K562 (cell line): ENCODE measurements at regions of chr7 and their contacts with region 1.

Region 1: GRCh38 chr7:121395961-121396757 is at the start of gene FAM3C:
- DNase-seq: peak; percentile 98 to 99 (median 99)
- ATAC-seq: peak; percentile 97
- H3K4me3 ChIP-seq: peak within 1 kb of the TSS; percentile 89
- H3K27ac ChIP-seq: peak within 1 kb of the TSS; percentile 79
- H3K4me1 ChIP-seq: peaks cover 5 to 10% of the 10 kb centered on the region in 2 experiments; a peak in 3 of 5 replicates
- H3K27me3 ChIP-seq: no peaks in the 10 kb centered on the region
- CTCF ChIP-seq: peak; percentile 92 to 95 (median 93)
- EP300 ChIP-seq: peak; percentile 32
- POLR2A ChIP-seq: peak; percentile 97
- RAD21 ChIP-seq: peak; percentile 54 to 69
- polyA plus RNA-seq, gene FAM3C: 10.6 to 13.1 TPM

Region 2: GRCh38 chr7:120950539-120951308 is 445.4 kb before region 1 on chr7 and contains the start of gene ING3:
- CTCF ChIA-PET with region 1: no interaction called
- POLR2A ChIA-PET with region 1: interaction called, 4 read pairs
- in situ Hi-C with region 1: no loop called
- intact Hi-C with region 1: loop called (anchors 5 kb)
- DNase-seq: peak; percentile 97 to 100 (median 98)
- ATAC-seq: peak; percentile 91
- H3K4me3 ChIP-seq: peak within 1 kb of the TSS; percentile 55
- H3K27ac ChIP-seq: peak within 1 kb of the TSS; percentile 95
- H3K4me1 ChIP-seq: peaks cover 0 to 5% of the 10 kb centered on the region in 2 experiments; a peak in 2 of 5 replicates
- H3K27me3 ChIP-seq: no peaks in the 10 kb centered on the region
- CTCF ChIP-seq: no peak
- EP300 ChIP-seq: peak; percentile 65
- POLR2A ChIP-seq: peak; percentile 95
- RAD21 ChIP-seq: no peak; a peak in 1 of 4 replicates
- polyA plus RNA-seq, gene ING3: 216 to 233 TPM

Region 3: GRCh38 chr7:121313793-121314676 is 82.1 kb before region 1 on chr7:
- CTCF ChIA-PET with region 1: no interaction called
- POLR2A ChIA-PET with region 1: no interaction called
- in situ Hi-C with region 1: no loop called
- intact Hi-C with region 1: no loop called
- DNase-seq: no peak
- ATAC-seq: peak; percentile 51
- H3K4me3 ChIP-seq: no peak overlapping the region
- H3K27ac ChIP-seq: no peak overlapping the region
- H3K4me1 ChIP-seq: no peaks in the 10 kb centered on the region
- H3K27me3 ChIP-seq: peaks cover 9 to 13% of the 10 kb centered on the region in 2 experiments
- CTCF ChIP-seq: no peak
- EP300 ChIP-seq: no peak
- POLR2A ChIP-seq: no peak
- RAD21 ChIP-seq: peak in 1 of 2 experiments; percentile 19; a peak in 1 of 4 replicates

Region 4: GRCh38 chr7:121352323-121352722 is 43.8 kb before region 1 on chr7:
- CTCF ChIA-PET with region 1: no interaction called
- POLR2A ChIA-PET with region 1: no interaction called
- in situ Hi-C with region 1: no loop called
- intact Hi-C with region 1: no loop called
- DNase-seq: no peak
- ATAC-seq: no peak
- H3K4me3 ChIP-seq: no peak overlapping the region
- H3K27ac ChIP-seq: no peak overlapping the region
- H3K4me1 ChIP-seq: no peaks in the 10 kb centered on the region
- H3K27me3 ChIP-seq: no peaks in the 10 kb centered on the region
- CTCF ChIP-seq: no peak
- EP300 ChIP-seq: no peak
- POLR2A ChIP-seq: no peak
- RAD21 ChIP-seq: no peak

Region 5: DNA sequence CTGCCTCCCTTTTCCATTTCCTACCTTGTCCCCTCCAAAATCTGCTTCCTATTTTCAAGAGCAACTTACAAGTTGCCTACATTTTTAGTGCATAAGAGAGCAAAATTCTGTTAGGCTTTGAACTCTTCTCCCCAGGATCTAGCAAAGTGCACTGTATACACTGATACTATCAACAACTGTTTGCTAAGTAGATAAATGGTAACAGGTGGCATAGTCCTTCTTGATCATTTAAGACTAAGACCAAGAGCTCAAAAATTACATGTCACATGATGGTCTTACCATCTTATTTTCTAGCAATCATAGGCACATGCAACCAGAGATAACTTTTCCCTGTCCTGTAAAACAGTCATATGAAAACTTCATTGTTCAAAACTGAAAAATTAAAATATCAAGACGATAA is 16.2 kb before region 1 on chr7:
- CTCF ChIA-PET with region 1: no interaction called
- POLR2A ChIA-PET with region 1: interaction called, 55 read pairs
- in situ Hi-C with region 1: no loop called
- intact Hi-C with region 1: no loop called
- DNase-seq: no peak
- ATAC-seq: no peak
- H3K4me3 ChIP-seq: no peak overlapping the region
- H3K27ac ChIP-seq: no peak overlapping the region
- H3K4me1 ChIP-seq: no peaks in the 10 kb centered on the region
- H3K27me3 ChIP-seq: no peaks in the 10 kb centered on the region
- CTCF ChIP-seq: no peak
- EP300 ChIP-seq: no peak
- POLR2A ChIP-seq: no peak
- RAD21 ChIP-seq: no peak

Region 6: DNA sequence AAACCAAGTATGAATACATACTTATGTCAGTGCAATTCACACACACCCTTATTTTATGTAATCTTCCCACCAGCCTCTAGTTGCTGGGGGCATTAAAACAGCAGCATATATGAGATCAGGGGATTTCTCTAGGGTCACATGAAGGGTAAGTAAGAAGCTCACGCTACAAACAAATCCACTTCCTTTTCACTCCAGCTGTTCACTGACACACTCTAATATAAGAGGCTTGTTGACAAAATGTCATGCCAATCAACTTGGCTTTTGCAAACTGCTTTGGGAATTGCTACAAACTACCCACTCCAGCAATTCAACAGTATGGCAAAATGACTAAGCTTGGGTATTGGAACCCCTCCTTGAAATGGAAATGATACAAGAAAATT is 10.4 kb before region 1 on chr7:
- CTCF ChIA-PET with region 1: no interaction called
- POLR2A ChIA-PET with region 1: interaction called, 55 read pairs
- in situ Hi-C with region 1: no loop called
- intact Hi-C with region 1: no loop called
- DNase-seq: no peak
- ATAC-seq: peak; percentile 20
- H3K4me3 ChIP-seq: no peak overlapping the region
- H3K27ac ChIP-seq: no peak overlapping the region
- H3K4me1 ChIP-seq: no peaks in the 10 kb centered on the region
- H3K27me3 ChIP-seq: no peaks in the 10 kb centered on the region
- CTCF ChIP-seq: no peak
- EP300 ChIP-seq: no peak
- POLR2A ChIP-seq: no peak
- RAD21 ChIP-seq: no peak

Region 7: GRCh38 chr7:121437456-121438127 is 41.4 kb after region 1 on chr7:
- CTCF ChIA-PET with region 1: no interaction called
- POLR2A ChIA-PET with region 1: interaction called, 7 read pairs
- in situ Hi-C with region 1: no loop called
- intact Hi-C with region 1: loop called (anchors 2 kb)
- DNase-seq: no peak
- ATAC-seq: peak; percentile 10
- H3K4me3 ChIP-seq: no peak overlapping the region
- H3K27ac ChIP-seq: peak overlapping the region; percentile 4; the same call in 1 of the 3 replicates
- H3K4me1 ChIP-seq: peaks cover 11 to 14% of the 10 kb centered on the region in 2 experiments; a peak in 4 of 5 replicates
- H3K27me3 ChIP-seq: no peaks in the 10 kb centered on the region
- CTCF ChIP-seq: no peak
- EP300 ChIP-seq: no peak
- POLR2A ChIP-seq: no peak
- RAD21 ChIP-seq: no peak

Region 8: DNA sequence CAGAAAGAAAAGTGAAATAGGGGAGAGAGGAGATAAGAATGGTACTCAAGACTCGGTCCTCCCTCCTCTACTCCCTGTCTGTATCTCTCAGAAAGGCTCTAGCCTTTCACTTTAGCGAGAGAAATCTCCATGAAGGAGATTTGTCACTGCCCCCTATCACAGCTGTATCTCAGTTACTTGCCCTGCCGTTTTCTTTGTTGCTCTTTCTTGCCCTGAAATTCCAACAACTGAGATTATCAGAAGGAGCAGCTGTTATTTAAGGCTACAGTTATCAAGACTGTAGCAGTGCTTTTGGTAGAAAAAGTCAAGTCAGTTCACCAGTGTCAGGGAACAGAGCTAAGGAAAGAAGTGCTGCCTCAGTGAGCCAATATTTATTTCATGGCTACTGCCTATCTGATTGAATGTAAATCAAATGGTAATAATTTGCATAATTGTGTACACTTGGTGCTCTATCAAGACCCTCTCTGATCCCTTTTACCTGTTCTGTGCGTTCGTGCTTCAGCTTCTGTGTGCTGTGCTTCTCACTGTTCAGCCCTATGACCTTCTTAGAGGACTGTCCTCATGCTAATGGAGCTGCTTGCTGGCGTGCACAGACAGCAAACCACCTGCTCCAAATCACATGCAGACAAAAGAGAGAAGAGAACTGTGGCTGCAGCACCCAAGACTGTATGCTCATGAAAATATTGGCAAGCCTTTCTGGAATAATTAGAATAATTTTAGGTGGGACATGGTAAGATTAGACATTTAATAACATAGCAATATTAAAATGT is 180.2 kb after region 1 on chr7:
- CTCF ChIA-PET with region 1: no interaction called
- POLR2A ChIA-PET with region 1: no interaction called
- in situ Hi-C with region 1: no loop called
- intact Hi-C with region 1: no loop called
- DNase-seq: no peak
- ATAC-seq: no peak
- H3K4me3 ChIP-seq: no peak overlapping the region
- H3K27ac ChIP-seq: no peak overlapping the region
- H3K4me1 ChIP-seq: no peaks in the 10 kb centered on the region
- H3K27me3 ChIP-seq: no peaks in the 10 kb centered on the region
- CTCF ChIP-seq: no peak
- EP300 ChIP-seq: no peak
- POLR2A ChIP-seq: no peak
- RAD21 ChIP-seq: no peak